ENCODE measurements at regions of chr1 and their contacts with region 1.

Region 1: GRCh38 chr1:64497088-64497883 is 27.4 kb downstream of the CACHD1 start:
- DNase-seq: no peak

Region 2: GRCh38 chr1:64417803-64418202 is 79.5 kb before region 1 on chr1:
- CTCF ChIA-PET with region 1: no interaction called
- POLR2A ChIA-PET with region 1: no interaction called
- DNase-seq: no peak

Region 3: GRCh38 chr1:64624218-64624713 is 127.0 kb after region 1 on chr1:
- CTCF ChIA-PET with region 1: no interaction called
- POLR2A ChIA-PET with region 1: no interaction called
- DNase-seq: no peak

Region 4: DNA sequence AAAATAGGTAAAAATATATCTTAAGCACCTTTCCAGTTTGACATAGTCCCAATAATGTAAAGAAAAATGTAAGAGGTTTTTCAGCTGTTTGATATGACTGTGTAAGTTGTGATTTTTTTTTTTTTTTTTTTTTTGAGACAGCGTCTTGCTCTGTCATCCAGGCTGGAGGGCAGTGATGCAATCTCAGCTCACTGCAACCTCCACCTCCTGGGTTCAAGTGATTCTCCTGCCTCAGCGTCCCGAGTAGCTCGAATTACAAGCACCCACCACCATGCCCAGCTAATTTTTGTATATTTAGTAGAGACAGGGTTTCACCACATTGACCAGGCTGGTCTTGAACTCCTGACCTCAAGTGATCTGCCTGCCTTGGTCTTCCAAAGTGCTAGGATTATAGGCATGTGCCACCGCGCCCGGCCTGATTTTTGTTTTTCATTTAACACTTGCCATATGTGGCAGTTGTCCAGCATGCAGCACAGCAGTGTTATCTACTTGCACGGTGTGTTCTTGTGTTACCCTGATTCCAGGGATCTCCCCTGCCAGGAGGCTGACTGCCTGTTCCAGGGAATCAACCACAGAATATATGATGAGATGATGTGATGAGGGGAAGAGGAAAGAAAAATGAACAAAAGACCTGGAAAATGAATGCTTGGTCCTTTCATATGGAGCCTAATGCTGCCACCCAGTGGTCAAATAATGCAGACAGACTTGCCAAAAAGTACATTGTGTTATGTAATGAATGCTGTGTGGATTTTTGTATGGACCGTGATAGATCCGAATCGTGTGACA is 326.6 kb after region 1 on chr1:
- CTCF ChIA-PET with region 1: interaction called, 11 read pairs
- POLR2A ChIA-PET with region 1: no interaction called
- DNase-seq: peak; percentile 75